ENCODE measurements at regions of chr4 and their contacts with region 1.

Region 1: DNA sequence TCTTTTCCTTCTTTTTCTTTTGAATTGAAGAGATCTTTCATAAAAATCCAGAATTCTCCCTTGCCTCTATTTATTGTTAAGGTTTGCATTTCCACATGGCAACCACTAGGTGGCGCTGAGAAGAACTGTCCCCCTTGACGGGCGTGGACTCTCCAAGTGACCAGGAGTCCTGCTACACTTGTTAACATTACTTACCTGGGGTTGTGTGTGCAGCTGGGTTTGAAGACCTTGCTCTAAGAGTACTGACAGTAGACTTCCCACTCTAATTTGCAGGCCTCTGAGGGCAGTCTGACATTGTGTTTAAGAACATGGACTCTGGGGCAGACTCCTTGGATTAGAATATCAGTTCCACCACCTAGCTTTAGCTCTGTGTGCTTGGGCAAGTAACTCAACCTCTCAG is 52.8 kb downstream of the GPRIN3 start:
- DNase-seq: peak; percentile 59
- H3K4me3 Mint-ChIP-seq: no peak overlapping the region
- H3K27ac Mint-ChIP-seq: peak overlapping the region; percentile 15
- H3K4me1 Mint-ChIP-seq: peaks cover 78% of the 10 kb centered on the region
- H3K27me3 Mint-ChIP-seq: no peaks in the 10 kb centered on the region

Region 2: DNA sequence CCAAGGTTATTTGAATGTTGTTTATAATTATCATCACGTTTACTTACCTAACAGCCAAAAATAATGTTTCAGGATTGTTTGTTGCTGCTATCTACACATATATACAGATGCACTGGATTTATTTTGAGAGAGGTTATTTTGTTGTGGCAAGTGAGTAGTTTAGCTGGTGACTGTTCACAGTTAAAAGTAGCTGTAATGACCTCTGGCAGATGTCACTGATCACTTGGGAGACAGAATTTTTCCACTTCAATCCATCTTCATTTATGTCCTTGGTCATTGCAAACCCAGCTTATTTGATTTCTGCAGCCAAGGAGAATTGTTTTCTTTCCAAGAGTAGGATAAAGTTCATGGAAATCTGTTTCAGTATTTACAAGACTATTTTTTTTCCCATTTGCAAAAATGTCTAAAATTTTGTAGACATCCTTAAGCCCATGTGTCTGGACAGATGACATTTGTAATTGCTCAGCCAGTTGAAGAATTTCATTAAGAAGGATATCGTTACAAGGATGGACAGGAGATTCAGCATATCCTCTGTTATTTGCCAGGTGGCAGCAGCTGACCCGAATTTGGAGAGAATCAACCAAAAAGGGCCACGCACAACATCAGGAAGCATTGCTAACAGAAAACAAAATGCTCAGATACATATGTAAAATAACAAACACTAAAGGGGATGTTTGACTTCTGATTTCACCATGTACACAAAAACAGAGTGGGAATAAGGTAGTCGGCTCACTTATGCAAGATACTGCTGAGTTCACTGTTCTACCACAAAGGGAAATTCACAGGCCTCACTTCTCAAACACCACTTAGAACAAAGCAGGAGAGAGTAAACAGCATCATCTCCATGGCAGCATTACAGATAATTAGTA is 11.7 kb before region 1 on chr4:
- CTCF ChIA-PET with region 1: interaction called, 20 read pairs
- POLR2A ChIA-PET with region 1: interaction called, 3 read pairs
- intact Hi-C with region 1: loop called (anchors 2 kb)
- DNase-seq: no peak
- H3K4me3 Mint-ChIP-seq: no peak overlapping the region
- H3K27ac Mint-ChIP-seq: peak overlapping the region; percentile 70
- H3K4me1 Mint-ChIP-seq: peaks cover 51% of the 10 kb centered on the region
- H3K27me3 Mint-ChIP-seq: no peaks in the 10 kb centered on the region

Region 3: DNA sequence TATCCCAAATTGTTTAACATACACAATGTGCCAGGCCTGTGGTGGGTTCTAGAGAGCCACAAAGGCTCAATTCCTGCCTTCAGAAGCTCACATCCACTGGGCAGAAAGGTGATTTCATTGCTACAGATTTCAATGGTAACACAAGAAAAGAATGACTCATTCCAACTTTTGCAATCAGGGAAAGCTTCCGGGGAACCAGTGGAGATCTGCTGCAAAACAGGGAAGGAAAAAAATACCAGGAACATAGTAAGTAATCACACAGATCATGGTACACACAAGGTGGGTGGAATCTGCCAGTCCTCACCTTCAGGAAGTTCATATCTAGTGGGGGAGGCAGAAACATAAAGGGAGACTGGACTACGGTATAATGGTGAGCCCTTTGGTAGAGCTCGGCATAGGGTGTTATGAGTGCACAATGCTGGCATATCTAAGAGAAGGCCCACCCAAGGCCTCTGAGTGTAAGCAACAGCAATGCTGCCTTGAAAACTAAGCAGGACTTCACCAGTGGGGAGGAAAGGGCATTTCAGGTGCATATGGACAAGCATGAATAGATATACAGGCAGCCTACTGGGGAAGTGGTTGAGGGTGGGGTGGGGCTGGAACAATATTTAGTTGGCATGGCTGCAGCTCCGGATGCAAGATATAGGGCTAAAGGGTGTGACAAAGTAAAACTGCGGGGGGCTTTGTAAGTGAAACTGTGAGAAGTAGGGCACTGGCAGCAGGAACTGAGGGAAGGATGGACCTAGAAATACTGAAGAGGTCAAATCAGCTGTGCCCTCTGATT is 28.6 kb after region 1 on chr4:
- CTCF ChIA-PET with region 1: interaction called, 21 read pairs
- POLR2A ChIA-PET with region 1: interaction called, 4 read pairs
- intact Hi-C with region 1: no loop called
- DNase-seq: peak; percentile 65
- H3K4me3 Mint-ChIP-seq: peak overlapping the region; percentile 20
- H3K27ac Mint-ChIP-seq: peak overlapping the region; percentile 77
- H3K4me1 Mint-ChIP-seq: peaks cover 72% of the 10 kb centered on the region
- H3K27me3 Mint-ChIP-seq: no peaks in the 10 kb centered on the region

Region 4: DNA sequence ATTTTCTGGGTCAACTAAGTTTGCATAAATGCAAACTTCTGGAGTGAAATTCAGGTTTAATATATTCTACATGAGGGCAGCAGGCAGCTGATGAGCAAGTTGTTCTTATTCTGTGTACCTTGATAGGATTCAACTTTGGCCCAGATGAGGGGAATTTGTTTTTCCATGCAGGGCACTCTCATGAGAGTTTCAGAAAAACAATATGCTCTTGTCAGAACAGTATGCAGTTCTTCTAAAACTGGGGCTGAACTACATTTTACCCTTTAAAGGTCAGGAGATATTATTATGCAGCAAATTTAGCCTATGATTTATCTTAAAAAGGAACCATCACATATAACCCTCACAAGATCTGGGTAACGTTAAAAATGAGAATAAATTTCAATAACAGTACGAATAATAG is 33.6 kb after region 1 on chr4:
- CTCF ChIA-PET with region 1: interaction called, 21 read pairs
- POLR2A ChIA-PET with region 1: interaction called, 4 read pairs
- intact Hi-C with region 1: loop called (anchors 1 kb)
- DNase-seq: no peak
- H3K4me3 Mint-ChIP-seq: peak overlapping the region; percentile 78
- H3K27ac Mint-ChIP-seq: peak overlapping the region; percentile 92
- H3K4me1 Mint-ChIP-seq: peaks cover 94% of the 10 kb centered on the region
- H3K27me3 Mint-ChIP-seq: no peaks in the 10 kb centered on the region

Region 5: DNA sequence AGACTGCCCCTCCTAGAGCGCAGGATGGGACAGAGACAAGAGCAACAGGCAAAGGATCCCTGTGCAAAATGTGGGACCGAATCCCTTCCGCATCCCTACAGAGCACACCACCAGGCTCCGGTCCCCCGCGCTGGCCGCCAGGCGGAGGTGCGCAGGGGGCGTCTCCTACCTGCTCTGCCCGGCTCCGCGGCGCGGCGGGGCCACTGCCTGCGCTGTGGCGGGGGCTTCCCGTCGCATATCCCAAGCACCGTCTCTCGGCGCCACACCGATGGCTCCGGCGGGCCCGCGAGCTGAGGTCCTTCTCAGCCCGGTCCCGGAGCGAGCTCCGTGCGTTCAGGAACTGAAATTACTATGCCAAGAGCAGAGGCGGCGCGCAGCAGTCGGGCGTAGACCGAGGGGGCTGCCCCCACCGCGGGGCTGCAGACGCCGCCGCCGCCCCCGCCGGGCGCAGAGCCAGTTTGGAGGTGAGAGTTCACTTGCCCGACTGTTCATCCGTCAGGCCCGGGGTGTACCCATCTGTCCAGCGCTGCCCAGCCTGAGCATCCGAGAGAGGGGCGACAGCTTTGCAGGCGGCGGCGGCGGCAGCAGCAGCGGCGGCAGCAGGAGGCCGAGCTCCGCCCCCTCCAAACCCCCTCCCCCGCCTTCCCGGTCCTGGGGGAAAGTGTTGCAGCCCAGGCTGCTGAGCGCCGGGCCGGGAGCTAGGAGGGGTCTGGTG is 52.8 kb after region 1 on chr4 and contains the start of gene GPRIN3:
- CTCF ChIA-PET with region 1: interaction called, 35 read pairs
- POLR2A ChIA-PET with region 1: no interaction called
- intact Hi-C with region 1: loop called (anchors 1 kb)
- DNase-seq: peak; percentile 81
- H3K4me3 Mint-ChIP-seq: peak within 1 kb of the TSS; percentile 89
- H3K27ac Mint-ChIP-seq: peak within 1 kb of the TSS; percentile 83
- H3K4me1 Mint-ChIP-seq: peaks cover 62% of the 10 kb centered on the region
- H3K27me3 Mint-ChIP-seq: no peaks in the 10 kb centered on the region
- total RNA-seq, gene GPRIN3: 20.0 to 22.7 TPM

Region 6: GRCh38 chr4:89434364-89434988 is 179.6 kb after region 1 on chr4:
- CTCF ChIA-PET with region 1: interaction called, 4 read pairs
- POLR2A ChIA-PET with region 1: no interaction called
- intact Hi-C with region 1: loop called (anchors 1 kb)
- DNase-seq: no peak
- H3K4me3 Mint-ChIP-seq: no peak overlapping the region
- H3K27ac Mint-ChIP-seq: no peak overlapping the region
- H3K4me1 Mint-ChIP-seq: peaks cover 12% of the 10 kb centered on the region
- H3K27me3 Mint-ChIP-seq: no peaks in the 10 kb centered on the region

Measured in activated CD4-positive, alpha-beta memory T cell treated with anti-CD3 and anti-CD28 coated beads for 36 hours (primary cell).